Common myeloid progenitor, CD34-positive (primary cell): ENCODE measurements at regions of chr1 and their contacts with region 1.

Region 1: DNA sequence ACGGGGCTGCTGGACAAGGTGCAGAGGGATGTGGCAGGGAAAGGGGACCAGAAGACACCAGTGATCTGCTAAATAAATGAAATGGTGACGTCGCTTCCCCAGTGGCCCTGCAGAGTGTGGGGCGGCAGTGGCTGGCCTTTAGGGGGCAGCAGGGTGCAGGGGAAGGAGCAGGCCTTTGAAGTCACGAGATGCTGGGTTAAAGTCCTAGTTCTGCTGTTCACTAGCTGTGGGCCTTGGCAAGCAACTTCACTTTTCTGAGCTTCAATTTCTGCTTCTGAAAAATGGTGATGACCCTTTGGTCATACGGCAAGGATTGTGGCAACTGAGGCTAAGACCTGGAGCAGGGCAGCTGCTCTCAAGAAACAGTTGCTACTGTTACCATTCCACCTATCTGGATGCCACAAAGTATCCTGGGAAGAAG is 9.2 kb upstream of the GALE start:
- DNase-seq: peak; percentile 89 to 94 (median 94)
- H3K4me3 ChIP-seq: no peak overlapping the region
- H3K27ac ChIP-seq: no peak overlapping the region
- H3K4me1 ChIP-seq: peaks cover 6 to 53% (median 39%) of the 10 kb centered on the region in 4 experiments
- H3K27me3 ChIP-seq: no peaks in the 10 kb centered on the region

Region 2: GRCh38 chr1:23772049-23772853 is 37.5 kb before region 1 on chr1:
- CTCF ChIA-PET with region 1: interaction called, 17 read pairs
- POLR2A ChIA-PET with region 1: interaction called, 13 read pairs
- DNase-seq: peak; percentile 76 to 87 (median 81)
- H3K4me3 ChIP-seq: no peak overlapping the region
- H3K27ac ChIP-seq: peak overlapping the region in 1 of 2 experiments; percentile 29
- H3K4me1 ChIP-seq: peaks cover 3 to 11% (median 8%) of the 10 kb centered on the region in 4 experiments
- H3K27me3 ChIP-seq: no peaks in the 10 kb centered on the region

Region 3: GRCh38 chr1:23854568-23854967 is 44.8 kb after region 1 on chr1:
- CTCF ChIA-PET with region 1: interaction called, 15 read pairs
- POLR2A ChIA-PET with region 1: no interaction called
- DNase-seq: peak in 2 of 3 donors; percentile 9 to 24
- H3K4me3 ChIP-seq: no peak overlapping the region
- H3K27ac ChIP-seq: no peak overlapping the region
- H3K4me1 ChIP-seq: no peaks in the 10 kb centered on the region
- H3K27me3 ChIP-seq: no peaks in the 10 kb centered on the region

Region 4: DNA sequence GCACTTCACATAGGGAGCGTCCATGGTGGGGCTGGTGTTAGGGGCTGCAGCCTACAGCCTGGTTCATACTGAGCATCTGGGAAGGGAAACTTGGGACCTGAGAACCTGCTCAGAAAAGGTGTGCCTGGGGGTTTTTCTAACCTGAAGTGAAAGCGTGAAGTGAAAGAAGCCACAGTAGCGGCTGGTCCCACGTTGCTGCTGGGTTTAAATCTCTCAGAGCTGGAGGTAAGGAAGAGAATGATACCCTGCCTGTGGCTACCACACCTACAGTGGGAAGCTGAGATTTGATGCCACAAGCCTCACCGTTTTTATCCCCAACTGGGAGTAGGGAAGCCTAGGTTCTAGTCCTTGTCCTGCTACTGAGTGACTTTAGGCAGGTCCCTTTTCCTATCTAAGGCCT is 79.3 kb after region 1 on chr1:
- CTCF ChIA-PET with region 1: interaction called, 12 read pairs
- POLR2A ChIA-PET with region 1: no interaction called
- DNase-seq: no peak
- H3K4me3 ChIP-seq: no peak overlapping the region
- H3K27ac ChIP-seq: no peak overlapping the region
- H3K4me1 ChIP-seq: peaks cover 0 to 15% (median 0%) of the 10 kb centered on the region in 4 experiments
- H3K27me3 ChIP-seq: no peaks in the 10 kb centered on the region

Region 5: DNA sequence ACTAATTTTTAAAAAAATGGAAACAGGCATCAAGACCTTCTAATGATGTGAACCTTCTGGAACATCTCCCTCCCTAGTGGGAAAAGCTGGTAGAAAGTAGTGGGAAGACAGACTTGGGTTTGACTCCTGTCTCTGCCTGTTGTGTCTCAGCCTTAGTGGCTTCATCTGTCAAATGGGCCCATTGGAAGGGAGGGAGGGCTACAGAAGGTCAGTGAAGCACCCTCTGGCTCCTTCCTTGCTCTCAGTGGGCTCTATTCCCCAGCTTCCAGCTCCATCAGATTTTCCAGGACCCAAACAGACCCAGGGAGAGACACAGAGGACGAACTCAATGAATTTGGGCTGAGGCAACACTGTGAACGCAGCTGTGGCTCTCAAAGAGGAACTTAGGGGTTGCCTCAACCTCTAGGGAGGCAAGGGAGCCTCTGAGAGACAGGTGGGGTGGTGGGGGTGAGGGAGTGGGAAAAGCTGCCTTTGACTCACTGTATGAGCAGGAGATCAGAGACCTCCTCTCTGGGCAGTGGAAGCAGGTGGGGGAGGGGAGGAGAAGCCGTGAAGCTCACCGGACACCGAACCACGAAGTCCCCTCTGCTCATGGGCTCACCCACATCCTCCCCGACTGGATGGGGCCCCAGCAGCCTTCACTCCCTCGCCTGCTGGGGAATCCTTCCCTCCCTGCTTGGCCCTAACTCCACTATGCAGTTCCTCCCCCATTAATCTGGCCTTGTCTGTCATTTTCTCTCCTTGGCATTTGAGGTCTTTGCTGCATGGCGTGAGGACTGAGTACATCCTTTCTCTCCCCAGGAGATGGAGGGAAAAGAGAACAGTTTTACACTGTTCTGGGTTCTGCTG is 99.0 kb after region 1 on chr1:
- CTCF ChIA-PET with region 1: interaction called, 12 read pairs
- POLR2A ChIA-PET with region 1: no interaction called
- DNase-seq: peak in 2 of 3 donors; percentile 87 to 91
- H3K4me3 ChIP-seq: peak overlapping the region in 4 of 7 experiments; percentile 3 to 48 (median 18)
- H3K27ac ChIP-seq: no peak overlapping the region
- H3K4me1 ChIP-seq: peaks cover 21 to 90% (median 58%) of the 10 kb centered on the region in 4 experiments
- H3K27me3 ChIP-seq: peaks cover 0 to 13% (median 9%) of the 10 kb centered on the region in 5 experiments